Caco-2 (cell line): ENCODE measurements at regions of chr7 and their contacts with region 1.

Region 1: DNA sequence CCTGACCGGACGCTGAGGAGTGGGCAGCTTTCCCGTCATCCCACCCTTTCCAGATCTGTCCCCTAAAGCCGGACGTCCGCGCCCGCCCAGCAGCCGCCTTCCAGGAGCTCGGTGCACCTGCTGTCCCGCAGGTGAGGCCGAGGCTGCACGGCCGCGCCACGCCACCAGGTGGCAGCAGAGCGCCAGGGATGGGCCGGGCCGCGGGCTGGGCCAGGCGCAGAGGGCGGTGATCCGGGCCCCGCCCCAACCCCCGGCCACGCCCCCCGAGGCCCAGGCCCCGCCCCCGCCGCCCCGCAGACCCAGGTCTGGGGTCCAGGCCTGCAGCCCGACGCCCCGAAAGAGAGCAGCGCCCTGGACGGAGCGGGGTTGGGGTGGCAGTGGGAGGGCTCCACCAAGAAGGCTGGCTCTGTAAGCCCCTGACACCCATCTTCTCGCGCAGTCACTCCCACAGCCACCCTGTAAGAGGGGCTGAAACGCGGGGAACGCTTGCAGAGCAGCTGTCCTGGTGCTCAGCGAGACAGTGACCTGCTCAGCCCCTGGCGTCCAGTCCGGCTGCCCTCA is 32.2 kb downstream of the FOXL3 start:
- DNase-seq: peak; percentile 77 to 96
- H3K4me3 ChIP-seq: no peak overlapping the region
- H3K4me3 Mint-ChIP-seq: peak overlapping the region; percentile 29
- H3K27ac Mint-ChIP-seq: no peak overlapping the region
- H3K4me1 ChIP-seq: peaks cover 62% of the 10 kb centered on the region
- H3K4me1 Mint-ChIP-seq: peaks cover 50% of the 10 kb centered on the region
- H3K27me3 ChIP-seq: no peaks in the 10 kb centered on the region
- H3K27me3 Mint-ChIP-seq: no peaks in the 10 kb centered on the region
- CTCF ChIP-seq: peak; percentile 81 to 93

Region 2: DNA sequence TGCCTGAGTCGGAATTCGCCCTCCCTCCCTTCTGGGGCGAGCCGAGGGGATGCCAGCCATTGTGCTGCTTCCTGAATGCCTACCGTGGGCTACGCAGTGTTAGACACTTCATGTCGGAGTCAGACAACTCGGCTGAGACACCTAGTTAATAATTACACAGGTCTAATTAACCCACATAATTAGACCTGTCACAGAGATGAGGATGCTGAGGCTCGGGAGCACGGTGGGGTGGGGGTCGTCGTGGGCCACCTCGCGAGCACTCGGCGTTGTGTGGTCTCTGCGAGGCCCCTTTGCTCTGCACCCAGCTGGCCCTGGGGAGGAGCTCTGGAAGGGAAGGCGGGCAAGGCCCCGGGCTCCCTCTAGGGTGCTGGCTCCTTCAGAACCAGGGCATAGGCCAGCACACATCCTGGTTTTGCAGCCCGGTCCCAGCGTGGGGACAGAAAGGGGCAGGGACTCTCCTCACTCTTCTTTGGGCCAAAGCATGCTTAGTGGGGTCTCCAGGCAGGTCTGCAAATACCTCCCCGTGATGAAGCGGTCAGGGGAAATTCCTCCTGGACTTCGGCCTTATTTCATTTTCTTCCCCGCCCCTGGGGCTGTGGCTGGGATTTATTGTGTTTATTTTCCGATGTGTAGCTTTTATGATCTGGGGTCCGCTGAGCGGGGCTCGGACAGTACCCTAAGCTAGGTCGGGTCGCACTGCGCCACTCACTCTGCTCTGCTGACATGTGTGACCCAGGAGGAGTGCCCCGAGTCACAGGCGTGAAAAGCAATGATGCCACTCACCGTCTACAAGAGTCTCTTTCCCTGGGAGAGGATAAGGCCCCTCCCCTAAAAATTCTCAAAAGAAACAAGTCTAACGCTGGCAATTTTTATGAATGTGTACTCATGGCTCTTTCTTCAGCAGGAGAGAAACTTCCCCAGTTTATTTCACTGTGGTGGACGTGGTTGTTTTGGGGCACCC is 37.1 kb before region 1 on chr7:
- CTCF ChIA-PET with region 1: interaction called, 3 read pairs
- POLR2A ChIA-PET with region 1: no interaction called
- intact Hi-C with region 1: loop called (anchors 2 kb)
- DNase-seq: peak; percentile 62 to 67
- H3K4me3 ChIP-seq: peak overlapping the region; percentile 16
- H3K4me3 Mint-ChIP-seq: peak overlapping the region; percentile 72
- H3K27ac Mint-ChIP-seq: peak overlapping the region; percentile 82
- H3K4me1 ChIP-seq: peaks cover 16% of the 10 kb centered on the region
- H3K4me1 Mint-ChIP-seq: peaks cover 26% of the 10 kb centered on the region
- H3K27me3 ChIP-seq: no peaks in the 10 kb centered on the region
- H3K27me3 Mint-ChIP-seq: no peaks in the 10 kb centered on the region
- CTCF ChIP-seq: peak in 1 of 2 experiments; percentile 6

Region 3: DNA sequence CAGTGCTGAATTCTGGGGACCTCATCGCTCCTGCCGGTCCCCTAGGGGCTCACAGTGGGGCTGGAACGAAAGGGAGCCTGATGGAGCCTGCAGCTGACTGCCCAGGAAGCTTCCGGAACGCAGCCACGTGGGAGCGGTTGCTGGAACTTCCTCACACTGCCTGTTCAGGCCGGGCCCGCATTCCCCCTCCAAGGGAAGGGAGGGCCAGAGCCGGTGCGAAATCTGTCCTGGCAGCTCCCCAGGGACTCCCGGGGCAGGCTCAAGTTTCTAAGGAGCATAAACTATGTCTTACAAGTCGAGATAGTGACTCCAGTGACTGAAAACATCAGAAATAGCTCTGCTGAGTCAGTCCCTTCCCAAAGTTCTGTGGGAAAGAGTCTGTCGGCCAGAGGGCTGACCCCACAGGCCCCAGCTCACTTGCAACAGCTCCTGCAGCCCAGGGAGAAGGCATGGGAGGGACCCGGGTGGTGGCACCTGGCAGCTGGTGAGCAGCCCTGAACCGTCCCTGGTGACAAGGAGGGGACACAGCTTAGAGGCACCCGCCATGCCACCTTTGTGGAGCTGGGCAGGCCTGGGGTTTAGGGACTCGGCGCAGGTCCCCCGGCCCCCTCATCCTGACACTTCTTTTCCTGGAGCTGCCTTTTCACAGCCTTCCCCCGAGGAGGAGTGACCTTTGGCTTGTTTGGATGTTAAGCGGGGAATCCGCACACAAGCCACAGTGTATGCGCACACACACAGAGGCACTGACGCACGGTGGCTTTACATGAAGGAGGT is 149.9 kb after region 1 on chr7:
- CTCF ChIA-PET with region 1: no interaction called
- POLR2A ChIA-PET with region 1: no interaction called
- intact Hi-C with region 1: no loop called
- DNase-seq: peak in 1 of 2 experiments; percentile 45
- H3K4me3 ChIP-seq: no peak overlapping the region
- H3K4me3 Mint-ChIP-seq: no peak overlapping the region
- H3K27ac Mint-ChIP-seq: no peak overlapping the region
- H3K4me1 ChIP-seq: peaks cover 21% of the 10 kb centered on the region
- H3K4me1 Mint-ChIP-seq: no peaks in the 10 kb centered on the region
- H3K27me3 ChIP-seq: no peaks in the 10 kb centered on the region
- H3K27me3 Mint-ChIP-seq: no peaks in the 10 kb centered on the region
- CTCF ChIP-seq: no peak

Region 4: DNA sequence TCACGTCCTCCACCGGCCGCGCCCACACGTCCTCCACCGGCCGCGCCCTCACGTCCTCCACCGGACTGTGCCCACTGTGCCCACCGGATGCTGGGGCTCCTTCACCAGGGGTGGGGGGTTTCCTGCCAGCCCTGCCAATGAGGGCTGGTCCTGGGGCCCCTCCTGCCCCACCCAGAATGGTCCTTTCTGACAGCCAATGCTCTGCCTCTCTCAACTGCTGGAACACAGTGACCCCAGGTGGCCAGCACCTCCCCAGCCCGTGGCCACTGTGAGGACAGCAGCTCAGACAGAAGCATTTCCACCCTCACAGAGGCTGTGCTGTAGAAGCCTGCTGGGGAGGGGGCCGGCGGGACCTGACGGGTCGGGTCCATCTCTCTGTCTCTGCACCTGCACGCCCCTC is 314.2 kb after region 1 on chr7:
- CTCF ChIA-PET with region 1: interaction called, 4 read pairs
- POLR2A ChIA-PET with region 1: no interaction called
- intact Hi-C with region 1: loop called (anchors 10 kb)
- DNase-seq: peak in 1 of 2 experiments; percentile 38
- H3K4me3 ChIP-seq: no peak overlapping the region
- H3K4me3 Mint-ChIP-seq: no peak overlapping the region
- H3K27ac Mint-ChIP-seq: no peak overlapping the region
- H3K4me1 ChIP-seq: no peaks in the 10 kb centered on the region
- H3K4me1 Mint-ChIP-seq: no peaks in the 10 kb centered on the region
- H3K27me3 ChIP-seq: no peaks in the 10 kb centered on the region
- H3K27me3 Mint-ChIP-seq: no peaks in the 10 kb centered on the region
- CTCF ChIP-seq: peak; percentile 15 to 39

Region 5: DNA sequence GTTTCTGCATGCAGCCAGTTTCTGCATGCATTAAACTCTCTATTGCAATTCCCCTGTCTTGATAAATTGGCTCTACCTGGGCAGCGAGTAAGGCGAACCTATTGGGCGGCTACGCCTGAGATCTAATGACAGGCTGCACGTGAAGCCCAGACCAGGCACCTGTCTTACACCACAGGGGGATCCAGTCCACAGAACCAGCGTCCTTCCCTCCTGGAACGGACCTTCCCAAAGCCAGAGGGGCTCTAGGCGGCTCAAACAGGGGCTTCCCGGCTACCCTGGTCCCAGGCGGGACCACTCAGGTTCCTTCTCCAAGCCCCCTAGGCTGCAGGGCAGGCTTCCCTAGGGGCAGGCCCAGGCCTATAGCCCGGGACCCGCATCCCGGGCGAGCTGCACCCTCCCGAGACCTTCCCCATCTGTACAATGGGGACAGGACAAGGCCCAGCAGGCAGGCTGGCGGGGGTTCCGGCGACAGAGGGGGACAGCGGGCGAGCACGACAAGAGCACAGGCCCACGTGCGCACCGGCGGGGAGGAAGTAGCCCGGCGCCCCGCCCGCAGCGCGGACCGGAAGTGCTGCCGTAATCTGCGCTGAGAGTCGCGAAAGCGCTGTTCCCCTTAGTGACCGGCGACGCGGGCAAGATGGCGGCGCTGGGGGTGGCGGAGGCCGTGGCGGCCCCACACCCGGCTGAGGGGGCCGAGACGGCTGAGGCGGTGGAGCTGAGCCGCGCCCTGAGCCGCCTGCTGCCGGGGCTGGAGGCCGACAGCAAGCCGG is 404.1 kb after region 1 on chr7 and contains the start of gene DNAAF5:
- CTCF ChIA-PET with region 1: no interaction called
- POLR2A ChIA-PET with region 1: no interaction called
- intact Hi-C with region 1: loop called (anchors 5 kb)
- DNase-seq: peak; percentile 88 to 89
- H3K4me3 ChIP-seq: peak within 1 kb of the TSS; percentile 87
- H3K4me3 Mint-ChIP-seq: peak within 1 kb of the TSS; percentile 98
- H3K27ac Mint-ChIP-seq: peak within 1 kb of the TSS; percentile 97
- H3K4me1 ChIP-seq: peaks cover 14% of the 10 kb centered on the region
- H3K4me1 Mint-ChIP-seq: peaks cover 6% of the 10 kb centered on the region
- H3K27me3 ChIP-seq: no peaks in the 10 kb centered on the region
- H3K27me3 Mint-ChIP-seq: no peaks in the 10 kb centered on the region
- CTCF ChIP-seq: peak in 1 of 2 experiments; percentile 2
- total RNA-seq, gene DNAAF5: 51.4 and 53.4 TPM in 2 replicates

Region 6: DNA sequence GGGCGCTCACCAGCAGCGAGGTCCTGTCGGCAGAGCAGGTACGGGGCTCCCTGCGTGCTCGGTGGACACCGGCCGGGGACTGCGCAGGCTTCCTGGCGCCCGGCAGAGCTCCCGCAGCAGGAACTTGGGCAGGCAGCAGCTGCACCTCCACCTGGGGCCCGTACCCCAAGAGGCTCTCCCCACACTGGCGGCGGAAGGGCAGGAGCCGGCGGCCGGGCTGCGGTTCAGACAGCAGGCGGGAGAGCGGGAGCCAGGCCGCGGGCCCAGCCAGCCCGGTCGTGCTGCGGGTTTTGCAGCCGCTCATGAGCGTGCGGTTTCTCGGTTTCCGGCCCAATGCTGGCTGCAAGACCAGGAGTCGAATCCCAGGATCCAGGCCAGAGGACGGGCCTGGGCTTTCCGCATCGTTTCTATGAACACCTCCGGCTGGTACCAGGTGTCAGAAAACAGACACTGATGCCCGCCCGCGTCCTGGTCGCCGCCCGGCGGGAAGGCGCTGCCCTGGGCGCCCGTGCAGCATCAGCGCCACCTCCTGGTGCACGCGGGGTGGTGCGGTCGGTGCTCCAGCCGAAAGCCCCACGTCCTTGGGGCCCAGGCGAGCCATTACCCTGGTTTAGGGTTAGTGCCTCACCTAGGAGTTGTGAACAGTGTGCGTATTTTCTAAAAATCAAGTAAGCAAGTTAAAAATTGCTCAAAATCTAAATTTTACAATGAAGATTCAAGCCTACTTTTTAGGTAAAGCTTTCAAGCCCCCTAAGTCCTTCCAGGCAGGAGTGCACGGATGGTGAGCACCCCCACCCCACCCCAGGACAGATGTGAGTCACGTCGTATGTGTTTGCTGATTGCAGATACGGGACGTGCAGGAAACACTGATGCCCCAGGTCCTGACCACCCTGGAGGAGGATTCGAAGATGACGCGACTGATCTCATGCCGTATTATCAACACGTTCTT is 452.2 kb after region 1 on chr7:
- CTCF ChIA-PET with region 1: interaction called, 3 read pairs
- POLR2A ChIA-PET with region 1: no interaction called
- intact Hi-C with region 1: loop called (anchors 2 kb)
- DNase-seq: peak in 1 of 2 experiments; percentile 70
- H3K4me3 ChIP-seq: no peak overlapping the region
- H3K4me3 Mint-ChIP-seq: no peak overlapping the region
- H3K27ac Mint-ChIP-seq: no peak overlapping the region
- H3K4me1 ChIP-seq: peaks cover 24% of the 10 kb centered on the region
- H3K4me1 Mint-ChIP-seq: peaks cover 7% of the 10 kb centered on the region
- H3K27me3 ChIP-seq: no peaks in the 10 kb centered on the region; the same call in 1 of the 2 replicates
- H3K27me3 Mint-ChIP-seq: no peaks in the 10 kb centered on the region
- CTCF ChIP-seq: peak; percentile 65 to 91